Heart left ventricle (tissue), 16 donors: ENCODE measurements at regions of chr6 and their contacts with region 1.

Region 1: GRCh38 chr6:108707328-108707960 is 140.8 kb upstream of the ARMC2 start:
- DNase-seq: no peak
- ATAC-seq: no peak
- H3K4me3 ChIP-seq: no peak overlapping the region
- H3K27ac ChIP-seq: no peak overlapping the region
- H3K4me1 ChIP-seq: peaks cover 0 to 28% (median 4%) of the 10 kb centered on the region in 12 donors
- H3K27me3 ChIP-seq: no peaks in the 10 kb centered on the region
- CTCF ChIP-seq: no peak
- POLR2A ChIP-seq: no peak

Region 2: DNA sequence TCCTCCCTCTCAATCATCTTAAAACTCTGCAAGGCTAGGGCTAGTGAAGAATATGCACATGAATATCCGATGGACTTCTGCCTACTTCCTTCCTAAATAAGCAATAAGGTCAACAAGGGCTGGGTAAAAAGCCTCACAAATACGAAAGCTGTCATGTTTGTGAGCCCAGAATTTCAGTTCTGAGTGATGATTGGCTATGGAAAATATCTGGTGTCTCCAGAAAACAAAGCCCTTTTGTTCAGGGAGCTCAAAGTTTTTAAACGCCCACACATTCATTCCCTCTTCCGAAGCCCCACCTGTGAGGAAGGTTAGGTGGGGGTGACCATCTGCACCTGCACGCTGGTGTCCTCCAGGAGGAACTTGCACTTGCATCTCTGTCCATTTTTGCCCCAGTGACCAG is 13.8 kb after region 1 on chr6:
- intact Hi-C with region 1: no loop called
- DNase-seq: no peak
- ATAC-seq: no peak
- H3K4me3 ChIP-seq: no peak overlapping the region
- H3K27ac ChIP-seq: no peak overlapping the region
- H3K4me1 ChIP-seq: peaks cover 0 to 10% (median 0%) of the 10 kb centered on the region in 12 donors
- H3K27me3 ChIP-seq: no peaks in the 10 kb centered on the region
- CTCF ChIP-seq: no peak
- POLR2A ChIP-seq: no peak

Region 3: GRCh38 chr6:108748055-108748454 is 40.6 kb after region 1 on chr6:
- intact Hi-C with region 1: loop called in 1 of 10 experiments (anchors 5 kb)
- DNase-seq: no peak
- ATAC-seq: no peak
- H3K4me3 ChIP-seq: no peak overlapping the region
- H3K27ac ChIP-seq: no peak overlapping the region
- H3K4me1 ChIP-seq: peaks cover 0 to 18% (median 4%) of the 10 kb centered on the region in 12 donors
- H3K27me3 ChIP-seq: no peaks in the 10 kb centered on the region
- CTCF ChIP-seq: no peak
- POLR2A ChIP-seq: no peak

Region 4: DNA sequence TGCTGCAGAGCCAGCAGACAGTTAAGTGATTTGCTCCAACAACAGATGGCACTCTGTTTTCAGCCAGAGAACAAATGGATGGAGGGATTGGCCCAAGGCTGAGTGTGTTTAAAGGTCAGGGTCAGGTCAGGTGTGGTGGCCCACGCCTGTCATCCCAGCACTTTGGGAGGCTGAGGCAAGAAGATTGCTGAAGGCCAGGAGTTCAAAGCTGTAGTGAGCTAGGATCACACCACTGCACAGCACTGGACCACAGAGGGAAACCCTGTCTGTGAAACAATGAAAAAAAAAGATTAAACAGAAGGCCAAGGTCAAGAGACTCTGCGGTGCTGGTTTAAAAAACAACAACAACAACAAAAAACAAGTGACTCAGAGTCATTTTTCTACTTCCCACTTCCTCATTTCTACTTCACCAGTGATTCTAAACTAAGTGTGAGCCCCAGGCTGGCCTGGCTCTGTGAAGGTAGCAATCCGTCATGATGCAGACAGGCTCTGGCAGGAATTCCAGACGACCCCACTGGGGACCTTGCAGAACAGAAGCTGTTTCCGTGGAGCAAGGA is 98.2 kb after region 1 on chr6:
- intact Hi-C with region 1: no loop called
- DNase-seq: peak in 1 of 5 donors; percentile 18
- ATAC-seq: peak in 1 of 4 donors; percentile 12
- H3K4me3 ChIP-seq: no peak overlapping the region
- H3K27ac ChIP-seq: peak overlapping the region in 1 of 12 donors; percentile 8
- H3K4me1 ChIP-seq: peaks cover 0 to 29% (median 4%) of the 10 kb centered on the region in 12 donors
- H3K27me3 ChIP-seq: no peaks in the 10 kb centered on the region
- CTCF ChIP-seq: no peak
- POLR2A ChIP-seq: no peak